SK-N-SH (cell line): ENCODE measurements at regions of chr10 and their contacts with region 1.

Region 1: DNA sequence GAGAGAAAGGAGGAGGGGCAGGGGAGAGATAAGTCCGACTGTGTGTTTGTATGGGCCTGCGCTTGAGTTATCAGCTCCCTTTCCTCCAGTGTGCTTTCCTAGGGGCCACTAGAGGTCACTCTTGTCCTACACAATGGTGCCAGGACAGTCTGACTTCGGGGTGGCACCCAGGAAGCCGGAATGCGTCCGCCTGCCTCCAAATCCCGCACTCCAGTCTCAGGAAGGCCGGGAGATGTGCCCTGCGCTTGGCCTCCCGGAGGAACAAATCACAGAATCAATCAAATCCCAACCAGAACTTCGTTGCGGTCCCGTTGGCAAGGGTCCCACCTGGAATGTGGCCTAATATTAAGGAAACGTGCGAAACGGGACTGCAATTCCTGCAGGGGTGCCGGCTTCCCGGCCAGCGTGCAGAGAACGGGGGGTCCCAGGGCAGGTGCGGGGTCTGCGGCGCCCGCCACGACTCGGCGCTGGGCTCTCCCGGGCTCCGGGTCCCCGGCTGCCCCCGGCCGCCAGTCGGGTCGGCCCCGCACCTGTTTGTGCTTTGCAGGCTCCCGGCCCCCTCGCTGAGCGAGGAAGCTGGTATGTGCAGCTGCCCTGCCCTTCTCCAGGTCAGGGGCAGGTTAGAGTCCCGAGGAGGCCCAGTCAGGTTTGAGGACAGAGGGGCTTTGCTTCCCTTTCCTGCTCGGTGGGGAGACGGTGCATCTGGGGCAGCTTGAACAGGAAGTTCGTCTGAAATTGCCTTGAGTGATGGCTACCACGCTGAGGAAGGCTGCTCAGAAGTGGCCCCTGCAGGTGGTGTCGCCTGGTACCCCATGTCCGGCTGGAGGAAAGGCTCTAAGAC is 21.0 kb upstream of the HPS1 start:
- DNase-seq: peak; percentile 88
- H3K4me3 ChIP-seq: peak overlapping the region; percentile 56 to 60
- H3K27ac ChIP-seq: no peak overlapping the region
- H3K4me1 ChIP-seq: no peaks in the 10 kb centered on the region; a peak in 1 of 4 replicates
- H3K27me3 ChIP-seq: peaks cover 18% of the 10 kb centered on the region; the same call in 1 of the 2 replicates
- CTCF ChIP-seq: peak; percentile 80
- EP300 ChIP-seq: no peak
- RAD21 ChIP-seq: peak; percentile 95

Region 2: DNA sequence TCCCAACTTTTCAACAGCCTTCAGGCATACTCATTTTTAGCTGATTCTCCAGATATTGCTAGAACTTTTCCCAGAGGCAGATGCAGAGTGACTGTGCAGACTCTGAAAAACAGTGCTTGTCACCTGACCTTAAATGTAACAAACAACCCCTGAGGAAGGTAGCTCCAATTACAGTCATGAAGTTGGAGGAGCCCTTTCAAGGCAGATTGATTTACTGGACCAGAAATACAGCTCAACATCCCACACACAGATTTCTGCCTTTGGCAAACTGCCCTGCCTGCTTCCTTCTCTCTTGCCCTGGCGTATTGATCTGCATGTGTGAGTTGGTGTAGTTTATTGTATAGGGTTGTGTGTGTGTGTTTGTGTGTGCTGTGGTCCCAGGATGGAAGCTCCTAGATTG is 91.2 kb before region 1 on chr10:
- CTCF ChIA-PET with region 1: no interaction called
- POLR2A ChIA-PET with region 1: no interaction called
- DNase-seq: no peak
- H3K4me3 ChIP-seq: no peak overlapping the region
- H3K27ac ChIP-seq: no peak overlapping the region; a peak in 1 of 4 replicates
- H3K4me1 ChIP-seq: peaks cover 8 to 18% of the 10 kb centered on the region in 2 experiments; a peak in 2 of 4 replicates
- H3K27me3 ChIP-seq: no peaks in the 10 kb centered on the region
- CTCF ChIP-seq: no peak
- EP300 ChIP-seq: no peak
- RAD21 ChIP-seq: no peak

Region 3: GRCh38 chr10:98425511-98426352 is 42.0 kb before region 1 on chr10:
- CTCF ChIA-PET with region 1: interaction called, 14 read pairs
- POLR2A ChIA-PET with region 1: no interaction called
- DNase-seq: peak; percentile 78
- H3K4me3 ChIP-seq: no peak overlapping the region
- H3K27ac ChIP-seq: no peak overlapping the region
- H3K4me1 ChIP-seq: peaks cover 0 to 3% of the 10 kb centered on the region in 2 experiments; a peak in 1 of 4 replicates
- H3K27me3 ChIP-seq: no peaks in the 10 kb centered on the region
- CTCF ChIP-seq: peak; percentile 65
- EP300 ChIP-seq: no peak
- RAD21 ChIP-seq: peak; percentile 53

Region 4: DNA sequence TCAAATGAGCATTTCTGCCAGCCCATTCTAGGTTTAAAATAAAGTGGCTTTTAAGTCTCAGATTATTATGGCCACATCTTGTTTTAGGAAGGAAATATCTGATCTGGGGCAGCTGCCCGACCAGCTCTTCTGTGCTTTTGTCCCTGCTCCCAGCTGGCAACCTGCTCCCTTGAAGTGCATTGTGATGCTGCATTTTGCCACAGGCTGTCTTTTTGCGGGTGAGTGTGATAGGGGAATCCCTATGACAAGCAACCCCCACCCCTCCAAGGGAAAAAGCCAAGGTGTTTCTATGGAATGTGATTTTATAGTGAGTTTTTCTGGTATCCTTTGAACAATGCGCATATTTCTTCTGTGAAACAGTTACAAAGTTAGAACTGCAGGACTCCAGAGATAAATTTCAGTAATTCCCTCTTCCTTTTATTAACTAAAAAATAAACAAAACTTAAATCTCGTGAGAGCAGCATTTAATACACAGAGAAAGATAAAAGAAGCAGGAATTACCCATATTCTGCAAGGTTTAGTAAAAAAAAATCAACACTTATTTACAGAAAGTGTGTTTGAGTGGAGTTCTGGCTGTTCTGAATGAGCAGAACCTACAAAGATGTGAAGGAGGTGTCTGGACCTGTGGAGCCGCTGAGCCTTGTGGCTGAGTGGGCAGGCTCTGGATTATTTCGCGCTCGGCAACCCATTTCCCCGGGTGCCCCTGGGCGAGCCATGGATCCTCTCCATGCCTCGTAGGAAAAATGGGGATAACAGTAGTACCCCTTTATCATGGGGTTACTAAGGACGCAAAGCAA is 10.8 kb before region 1 on chr10:
- CTCF ChIA-PET with region 1: interaction called, 13 read pairs
- POLR2A ChIA-PET with region 1: no interaction called
- DNase-seq: peak; percentile 42
- H3K4me3 ChIP-seq: no peak overlapping the region
- H3K27ac ChIP-seq: no peak overlapping the region
- H3K4me1 ChIP-seq: peaks cover 0 to 20% of the 10 kb centered on the region in 2 experiments; a peak in 2 of 4 replicates
- H3K27me3 ChIP-seq: no peaks in the 10 kb centered on the region; the same call in 1 of the 2 replicates
- CTCF ChIP-seq: no peak
- EP300 ChIP-seq: no peak
- RAD21 ChIP-seq: no peak

Region 5: DNA sequence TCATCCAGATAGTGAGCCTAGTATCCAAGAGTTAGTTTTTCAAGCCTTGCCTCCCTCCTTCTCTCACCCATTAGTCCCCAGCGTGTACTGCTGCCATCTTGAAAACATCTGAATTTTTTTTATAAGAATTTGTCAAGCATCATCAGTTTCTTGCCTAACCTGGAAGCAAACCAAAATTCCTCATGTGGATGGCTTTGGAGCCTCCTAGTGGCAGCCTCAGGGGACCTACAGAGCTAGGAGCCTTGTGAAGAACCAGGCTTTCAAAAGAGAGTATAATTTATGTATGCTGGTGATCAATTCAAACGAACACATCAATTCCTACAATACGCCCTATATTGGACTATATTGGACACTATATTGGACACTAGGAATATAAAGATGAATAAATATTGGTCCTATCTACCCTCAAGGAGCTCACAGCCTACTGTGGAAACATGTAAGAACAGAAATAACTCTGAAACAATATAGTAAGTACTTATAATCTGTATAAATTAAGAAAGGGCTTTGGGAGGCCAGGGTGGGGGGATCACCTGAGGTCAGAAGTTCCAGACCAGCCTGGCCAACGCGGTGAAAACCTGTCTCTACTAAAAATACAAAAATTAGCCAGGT is 704.5 kb after region 1 on chr10:
- CTCF ChIA-PET with region 1: interaction called, 27 read pairs
- POLR2A ChIA-PET with region 1: no interaction called
- DNase-seq: peak; percentile 72
- H3K4me3 ChIP-seq: peak overlapping the region in 1 of 2 experiments; percentile 43; a peak in 1 of 4 replicates
- H3K27ac ChIP-seq: no peak overlapping the region
- H3K4me1 ChIP-seq: no peaks in the 10 kb centered on the region
- H3K27me3 ChIP-seq: no peaks in the 10 kb centered on the region
- CTCF ChIP-seq: peak; percentile 38
- EP300 ChIP-seq: no peak
- RAD21 ChIP-seq: peak; percentile 91

Region 6: GRCh38 chr10:99276848-99277486 is 809.2 kb after region 1 on chr10:
- CTCF ChIA-PET with region 1: interaction called, 12 read pairs
- POLR2A ChIA-PET with region 1: no interaction called
- DNase-seq: peak; percentile 18
- H3K4me3 ChIP-seq: no peak overlapping the region
- H3K27ac ChIP-seq: no peak overlapping the region
- H3K4me1 ChIP-seq: no peaks in the 10 kb centered on the region
- H3K27me3 ChIP-seq: no peaks in the 10 kb centered on the region
- CTCF ChIP-seq: peak; percentile 45
- EP300 ChIP-seq: no peak
- RAD21 ChIP-seq: peak; percentile 64

Region 7: DNA sequence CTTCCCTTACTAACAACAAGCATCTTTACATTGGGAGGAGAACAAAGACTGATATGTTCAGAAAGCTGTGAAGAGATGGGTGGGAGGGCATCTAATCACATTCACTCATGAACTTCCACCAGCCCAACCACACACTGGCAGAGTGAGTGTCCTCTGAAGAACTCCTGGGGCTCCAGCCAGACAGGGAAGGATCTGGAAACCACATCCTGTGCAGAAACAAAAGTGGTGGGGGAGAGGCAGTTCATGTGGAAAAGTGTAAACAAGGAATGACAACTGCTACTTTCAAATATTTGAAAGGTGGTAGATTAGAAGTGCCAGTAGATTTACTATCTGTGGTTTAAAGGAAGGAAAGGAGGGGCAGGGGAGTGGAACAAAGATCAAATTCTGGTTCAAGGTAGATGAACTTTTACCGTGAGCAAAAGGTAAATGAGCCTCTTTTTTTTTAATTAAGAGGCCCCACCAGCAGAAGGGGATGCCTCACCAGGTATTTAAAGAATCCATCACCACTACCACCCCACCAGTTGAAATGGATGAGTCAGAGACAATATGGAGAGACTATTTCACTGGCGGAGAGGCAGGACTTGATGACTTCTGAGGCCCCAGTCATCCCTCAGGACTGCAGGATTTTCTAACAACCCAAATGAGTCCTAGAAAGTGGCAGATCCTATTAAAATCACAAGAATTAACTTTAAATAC is 928.2 kb after region 1 on chr10:
- CTCF ChIA-PET with region 1: interaction called, 13 read pairs
- POLR2A ChIA-PET with region 1: no interaction called
- DNase-seq: no peak
- H3K4me3 ChIP-seq: no peak overlapping the region
- H3K27ac ChIP-seq: peak overlapping the region; percentile 67 to 77; a peak in 3 of 4 replicates
- H3K4me1 ChIP-seq: peaks cover 0 to 12% of the 10 kb centered on the region in 2 experiments; a peak in 2 of 4 replicates
- H3K27me3 ChIP-seq: no peaks in the 10 kb centered on the region
- CTCF ChIP-seq: no peak
- EP300 ChIP-seq: no peak
- RAD21 ChIP-seq: no peak